Prostate gland (tissue), 2 donors: ENCODE measurements at regions of chr14 and their contacts with region 1.

Region 1: DNA sequence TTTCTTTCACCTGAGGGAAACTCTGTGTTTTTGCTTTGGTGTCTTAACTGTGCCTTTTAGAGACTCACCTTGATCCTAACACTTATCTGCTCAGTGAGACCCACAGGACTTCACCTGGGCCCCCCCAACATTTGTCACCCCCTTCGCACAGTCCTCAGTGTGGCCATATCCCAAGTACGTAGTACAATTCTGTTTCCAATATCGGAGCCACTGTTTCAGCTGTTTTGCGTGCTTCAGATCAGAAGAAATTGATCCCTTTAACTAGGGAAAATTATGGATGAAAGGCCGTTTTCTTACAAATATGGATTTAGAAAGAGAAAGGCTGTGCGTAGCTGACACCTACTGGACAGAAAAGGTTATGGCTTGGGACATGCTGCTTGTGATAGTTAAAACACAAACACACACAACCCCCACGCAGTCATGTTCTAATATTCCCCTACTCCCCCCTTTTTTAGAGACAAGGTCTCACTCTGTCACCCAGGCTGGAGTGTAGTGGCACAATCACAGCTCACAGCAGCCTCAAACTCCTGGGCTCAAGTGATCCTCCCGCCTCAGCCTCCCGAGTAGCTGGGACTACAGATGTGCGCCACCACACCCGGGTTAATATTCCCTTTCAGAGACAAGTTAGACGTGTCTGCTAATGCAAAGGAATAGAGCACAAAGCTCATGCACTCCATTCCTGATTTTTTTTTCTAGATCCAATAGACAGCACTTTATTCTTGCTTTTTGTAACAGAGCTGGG is 3.6 kb upstream of the SLC7A8 start:
- DNase-seq: peak; percentile 58
- H3K4me3 ChIP-seq: no peak overlapping the region
- H3K27ac ChIP-seq: no peak overlapping the region
- H3K4me1 ChIP-seq: no peaks in the 10 kb centered on the region
- H3K27me3 ChIP-seq: no peaks in the 10 kb centered on the region
- CTCF ChIP-seq: peak; percentile 46 to 96 (median 80)
- POLR2A ChIP-seq: no peak

Region 2: GRCh38 chr14:23009939-23010726 is 177.0 kb before region 1 on chr14 and contains the start of gene C14orf93:
- intact Hi-C with region 1: no loop called
- DNase-seq: peak; percentile 82
- H3K4me3 ChIP-seq: peak within 1 kb of the TSS; percentile 38 to 40
- H3K27ac ChIP-seq: peak within 1 kb of the TSS; percentile 82 to 85
- H3K4me1 ChIP-seq: peaks cover 2% of the 10 kb centered on the region
- H3K27me3 ChIP-seq: no peaks in the 10 kb centered on the region
- CTCF ChIP-seq: peak in 1 of 4 experiments; percentile 9
- POLR2A ChIP-seq: peak; percentile 47
- total RNA-seq, gene C14orf93: 15.1 to 17.6 TPM

Region 3: DNA sequence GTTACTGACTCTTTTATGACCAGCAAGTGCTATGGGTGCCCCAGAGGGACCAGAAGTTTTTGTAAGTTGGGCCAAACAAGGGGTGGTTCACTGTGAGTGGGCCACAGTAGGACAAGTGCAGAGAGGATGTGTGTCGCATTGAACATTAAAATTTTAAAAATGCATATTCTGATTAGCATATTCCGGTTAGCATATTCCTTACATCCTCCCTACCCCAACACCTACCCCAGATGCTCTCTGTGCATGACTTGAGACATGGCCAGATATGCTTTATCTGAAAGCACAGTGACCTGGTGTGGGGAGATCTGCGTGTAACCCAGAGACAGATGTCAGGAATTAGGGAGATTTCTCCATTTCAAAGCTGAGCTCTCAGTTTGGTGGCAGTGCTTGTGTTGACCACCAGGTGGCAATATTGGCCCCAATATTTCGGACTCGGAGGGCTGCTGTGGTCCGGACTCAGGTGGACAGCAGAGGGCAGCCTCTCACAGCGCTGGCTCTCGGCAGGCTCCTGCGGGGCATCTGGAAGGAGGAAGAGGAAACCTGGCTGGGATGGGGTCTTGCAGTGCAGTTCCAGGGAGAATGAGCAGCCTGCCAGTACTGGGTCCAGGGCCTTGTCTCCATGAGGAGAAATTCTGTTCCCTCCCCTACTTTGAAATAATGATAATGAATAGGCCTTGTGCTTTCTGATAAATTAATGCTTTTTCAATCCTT is 66.4 kb before region 1 on chr14:
- intact Hi-C with region 1: loop called (anchors 1 kb)
- DNase-seq: peak; percentile 88
- H3K4me3 ChIP-seq: no peak overlapping the region
- H3K27ac ChIP-seq: peak overlapping the region in 1 of 2 donors; percentile 0
- H3K4me1 ChIP-seq: no peaks in the 10 kb centered on the region
- H3K27me3 ChIP-seq: peaks cover 3% of the 10 kb centered on the region
- CTCF ChIP-seq: peak; percentile 99 to 100 (median 100)
- POLR2A ChIP-seq: no peak

Region 4: DNA sequence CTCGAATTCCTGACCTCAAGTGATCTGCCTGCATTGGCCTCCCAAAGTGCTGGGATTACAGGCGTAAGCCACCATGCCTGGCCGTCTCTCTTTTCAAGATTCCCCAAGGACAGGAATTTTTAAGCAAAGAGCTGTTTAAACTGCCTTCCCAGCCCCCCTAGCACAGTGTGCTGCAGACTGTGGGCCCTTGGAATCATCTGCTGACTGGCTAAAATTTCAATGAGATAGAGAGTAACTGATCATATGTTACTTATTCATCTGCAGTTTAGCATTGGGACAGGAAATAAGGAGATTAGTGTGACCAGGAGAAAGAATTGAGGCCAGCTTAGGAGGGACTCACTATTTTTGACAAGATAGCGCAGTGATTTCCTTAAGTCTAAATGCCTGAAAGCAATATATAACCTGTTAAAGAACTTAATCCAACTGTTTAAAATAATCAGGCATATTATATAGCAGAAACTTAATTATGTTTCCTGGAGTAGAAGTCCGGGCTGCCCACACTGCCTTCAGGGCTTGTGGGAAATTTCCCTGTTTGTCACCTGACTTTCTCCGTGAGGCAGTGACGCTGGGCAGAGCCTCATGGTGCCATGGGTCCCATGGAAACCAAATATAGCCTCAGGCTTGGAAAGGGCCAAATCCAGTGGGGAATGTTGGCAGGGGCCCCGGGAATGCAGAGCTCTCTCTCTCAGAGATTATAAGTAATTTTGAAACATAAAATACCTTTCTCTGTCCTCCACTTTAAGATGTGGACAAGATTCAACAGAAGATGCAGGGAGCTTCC is 45.2 kb before region 1 on chr14:
- intact Hi-C with region 1: loop called (anchors 5 kb)
- DNase-seq: peak; percentile 69
- H3K4me3 ChIP-seq: no peak overlapping the region
- H3K27ac ChIP-seq: peak overlapping the region; percentile 43 to 47
- H3K4me1 ChIP-seq: no peaks in the 10 kb centered on the region
- H3K27me3 ChIP-seq: no peaks in the 10 kb centered on the region
- CTCF ChIP-seq: no peak
- POLR2A ChIP-seq: no peak

Region 5: GRCh38 chr14:23154964-23155587 is 32.0 kb before region 1 on chr14:
- intact Hi-C with region 1: loop called (anchors 2 kb)
- DNase-seq: peak; percentile 91
- H3K4me3 ChIP-seq: peak overlapping the region in 1 of 2 donors; percentile 28
- H3K27ac ChIP-seq: peak overlapping the region; percentile 91 to 97
- H3K4me1 ChIP-seq: peaks cover 25% of the 10 kb centered on the region
- H3K27me3 ChIP-seq: no peaks in the 10 kb centered on the region
- CTCF ChIP-seq: peak in 1 of 4 experiments; percentile 35
- POLR2A ChIP-seq: no peak